ENCODE measurements at regions of chr17 and their contacts with region 1.

Region 1: DNA sequence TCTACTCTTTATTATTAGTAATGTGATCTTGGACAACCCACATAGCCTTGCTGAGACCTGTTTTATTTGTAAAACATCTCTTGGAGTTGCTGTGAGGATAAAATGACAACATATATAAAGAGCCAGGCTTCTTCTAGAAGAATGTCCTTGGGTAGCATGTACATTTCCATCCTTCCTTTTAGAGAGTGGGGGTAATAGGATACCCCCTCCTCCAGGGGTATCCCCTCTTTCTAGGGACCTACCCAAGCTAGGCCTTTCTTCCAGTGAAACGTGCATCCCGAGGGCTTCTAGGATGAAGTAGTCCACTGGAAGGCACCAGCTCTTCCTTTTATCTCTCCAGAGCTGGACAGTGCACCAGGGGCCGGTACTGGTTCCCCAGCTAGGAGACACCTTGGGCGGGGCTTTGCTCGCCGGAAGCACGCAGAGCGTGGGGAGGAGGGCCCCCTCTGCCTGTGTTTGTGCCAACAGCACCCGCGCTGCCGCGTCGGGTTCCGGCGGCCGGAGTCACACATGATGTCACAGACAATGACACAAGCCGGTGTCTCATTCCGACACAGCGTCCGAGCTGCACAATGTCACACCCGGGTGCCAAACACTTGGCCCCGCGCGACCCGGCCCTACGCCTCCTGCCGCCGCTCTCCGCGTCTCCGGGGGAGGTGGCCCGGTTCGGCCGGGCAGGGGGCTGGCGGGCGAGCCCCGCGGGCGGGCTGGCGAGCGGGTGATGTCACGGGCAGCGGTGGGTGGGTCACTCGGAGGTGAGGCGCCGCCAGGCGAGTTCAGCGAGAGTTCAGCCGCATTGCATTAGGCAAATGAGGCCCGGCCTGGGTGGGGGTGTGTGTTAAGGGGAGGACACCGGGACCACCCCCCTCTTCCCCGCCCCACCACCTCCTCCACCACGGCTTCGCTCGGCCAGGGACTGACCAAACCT is 23.4 kb downstream of the GJD3 start:
- DNase-seq: peak; percentile 98
- ATAC-seq: peak; percentile 84

Region 2: GRCh38 chr17:40098846-40099618 is 242.1 kb before region 1 on chr17:
- intact Hi-C with region 1: loop called (anchors 10 kb)
- DNase-seq: peak; percentile 100
- ATAC-seq: peak; percentile 86

Region 3: DNA sequence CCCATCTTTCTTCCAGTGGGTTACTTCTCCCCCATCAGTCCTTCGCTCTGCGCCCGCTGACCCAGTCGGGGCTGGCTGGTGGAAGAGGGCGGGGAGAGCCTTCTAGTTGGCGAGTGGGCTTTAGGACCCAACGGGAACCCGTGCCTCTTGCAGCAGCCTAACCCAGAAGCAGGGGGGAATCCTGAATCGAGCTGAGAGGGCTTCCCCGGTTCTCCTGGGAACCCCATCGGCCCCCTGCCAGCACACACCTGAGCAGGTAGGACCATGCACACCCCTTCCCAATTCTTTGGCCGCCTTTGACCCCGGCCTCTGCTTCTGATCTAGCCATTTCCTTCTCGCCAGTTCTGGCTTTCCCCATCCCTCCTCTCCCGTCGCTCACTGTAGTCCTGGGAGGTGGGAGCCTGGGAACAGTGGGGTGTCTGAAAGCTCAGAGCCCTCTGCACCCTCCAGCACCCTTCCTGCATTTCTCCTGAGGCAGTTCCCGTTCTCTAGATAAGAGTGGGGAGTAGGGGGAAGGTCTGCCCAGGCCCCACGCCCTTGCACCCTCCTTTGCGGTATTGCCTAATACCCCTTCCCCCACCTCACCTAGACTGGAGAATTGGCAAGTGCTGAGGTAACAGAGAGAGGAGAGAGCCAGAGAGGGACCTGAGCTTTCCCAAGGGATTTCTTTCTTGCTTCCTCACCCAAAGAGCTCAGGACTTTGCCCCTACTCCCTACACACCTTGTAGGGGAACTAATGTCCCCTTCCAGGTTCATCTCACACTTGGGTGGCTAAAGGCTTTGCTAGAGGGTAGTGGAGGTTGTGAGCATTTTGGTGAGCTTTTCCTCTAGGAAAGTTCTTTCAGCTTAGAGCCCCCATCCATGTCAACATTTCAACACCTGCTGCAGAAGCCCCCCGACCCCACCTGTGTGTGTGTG is 31.9 kb before region 1 on chr17 and contains the start of gene RARA:
- intact Hi-C with region 1: no loop called
- DNase-seq: no peak
- ATAC-seq: peak; percentile 36
- total RNA-seq, gene RARA: 17.9 TPM

Region 4: DNA sequence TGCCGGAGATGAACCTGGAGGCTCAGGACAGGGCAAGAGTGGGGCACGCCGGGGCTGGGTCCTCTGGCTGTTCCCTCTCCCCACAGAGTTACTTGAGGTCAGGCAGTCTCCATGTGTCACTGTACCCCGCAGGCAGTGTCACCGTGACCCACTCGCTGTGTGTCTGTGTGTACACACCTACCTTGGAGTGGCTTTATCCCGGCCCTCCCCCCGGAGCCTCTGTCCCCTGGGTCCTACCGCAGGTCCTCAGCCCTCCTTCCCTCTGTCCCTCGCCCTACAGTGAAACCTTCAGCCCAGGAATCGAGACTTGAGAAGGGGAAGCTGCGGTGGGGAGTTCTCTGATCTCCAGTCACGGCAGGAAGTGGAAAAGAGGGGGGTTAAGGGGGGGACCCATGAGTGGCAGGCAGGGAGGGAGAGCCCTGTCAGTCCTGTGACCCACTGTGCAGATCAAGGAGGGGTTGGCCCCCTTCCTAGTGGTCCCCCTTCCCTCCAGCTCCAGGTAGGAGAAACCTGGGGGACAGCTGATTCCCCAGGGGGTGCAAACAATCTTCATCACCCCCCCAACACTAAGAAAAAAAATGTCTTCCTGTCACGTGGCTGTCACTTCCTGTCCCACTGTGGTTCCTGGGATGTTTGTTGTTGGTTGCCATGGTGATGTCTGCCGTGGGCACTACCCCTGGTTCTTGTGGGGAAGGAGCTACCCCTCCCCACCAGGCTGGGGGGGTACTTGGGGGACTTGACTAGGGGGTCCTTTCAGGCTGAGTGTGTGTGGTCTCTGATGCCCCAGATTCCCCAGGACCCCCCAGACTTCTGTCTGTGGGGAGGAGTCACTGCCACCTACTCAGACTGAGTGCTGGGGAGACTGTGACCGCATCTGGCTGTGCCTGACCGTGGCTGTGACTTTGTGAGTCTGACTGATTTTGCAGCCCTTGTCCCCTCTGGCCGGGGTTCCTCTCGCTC is 18.5 kb before region 1 on chr17:
- intact Hi-C with region 1: loop called (anchors 2 kb)
- DNase-seq: peak; percentile 87
- ATAC-seq: peak; percentile 18